IMR-90 (cell line): ENCODE measurements at regions of chr9 and their contacts with region 1.

Region 1: DNA sequence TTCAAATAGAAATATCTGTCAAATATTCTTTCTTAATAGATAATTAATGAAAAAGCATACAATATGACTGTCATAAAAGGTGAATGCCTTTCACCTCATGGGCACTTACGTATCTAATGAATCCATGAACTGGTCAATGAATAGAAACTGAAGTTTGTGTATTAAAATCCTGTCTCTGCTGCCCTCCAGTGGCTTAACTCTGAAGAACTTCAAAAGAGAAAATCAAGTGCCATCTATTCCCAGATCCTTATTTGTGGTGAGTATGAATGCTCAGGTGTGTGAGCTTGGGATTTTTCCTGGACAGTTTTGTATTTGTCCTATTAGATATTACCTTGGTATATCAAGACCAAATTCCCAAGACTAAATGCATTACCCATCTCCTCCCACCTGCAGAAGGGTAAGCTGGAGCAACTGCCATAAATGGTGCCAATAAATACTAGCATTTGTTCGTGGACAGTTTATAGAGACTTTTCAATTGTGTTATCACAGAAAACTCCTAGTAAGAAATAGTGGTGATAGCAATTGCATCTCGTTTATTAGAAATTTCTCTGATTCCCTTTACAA is 44.0 kb upstream of the SVEP1 start:
- DNase-seq: peak; percentile 70
- ATAC-seq: peak; percentile 11; the same call in 1 of the 2 replicates
- H3K4me3 ChIP-seq: no peak overlapping the region
- H3K27ac ChIP-seq: no peak overlapping the region
- H3K4me1 ChIP-seq: peaks cover 5% of the 10 kb centered on the region
- H3K27me3 ChIP-seq: no peaks in the 10 kb centered on the region
- CTCF ChIP-seq: peak; percentile 76
- POLR2A ChIP-seq: no peak
- RAD21 ChIP-seq: peak; percentile 81

Region 2: GRCh38 chr9:110256380-110257096 is 367.0 kb before region 1 on chr9 and contains the start of gene TXN:
- CTCF ChIA-PET with region 1: no interaction called
- POLR2A ChIA-PET with region 1: interaction called, 4 read pairs
- dilution Hi-C with region 1: no loop called
- in situ Hi-C with region 1: no loop called
- intact Hi-C with region 1: loop called (anchors 5 kb)
- DNase-seq: peak; percentile 87
- ATAC-seq: peak; percentile 91
- H3K4me3 ChIP-seq: peak within 1 kb of the TSS; percentile 71
- H3K27ac ChIP-seq: peak within 1 kb of the TSS; percentile 91
- H3K4me1 ChIP-seq: peaks cover 12% of the 10 kb centered on the region
- H3K27me3 ChIP-seq: no peaks in the 10 kb centered on the region
- CTCF ChIP-seq: no peak
- POLR2A ChIP-seq: peak; percentile 98
- RAD21 ChIP-seq: no peak
- total RNA-seq, gene TXN: 277 and 588 TPM in 2 replicates

Region 3: DNA sequence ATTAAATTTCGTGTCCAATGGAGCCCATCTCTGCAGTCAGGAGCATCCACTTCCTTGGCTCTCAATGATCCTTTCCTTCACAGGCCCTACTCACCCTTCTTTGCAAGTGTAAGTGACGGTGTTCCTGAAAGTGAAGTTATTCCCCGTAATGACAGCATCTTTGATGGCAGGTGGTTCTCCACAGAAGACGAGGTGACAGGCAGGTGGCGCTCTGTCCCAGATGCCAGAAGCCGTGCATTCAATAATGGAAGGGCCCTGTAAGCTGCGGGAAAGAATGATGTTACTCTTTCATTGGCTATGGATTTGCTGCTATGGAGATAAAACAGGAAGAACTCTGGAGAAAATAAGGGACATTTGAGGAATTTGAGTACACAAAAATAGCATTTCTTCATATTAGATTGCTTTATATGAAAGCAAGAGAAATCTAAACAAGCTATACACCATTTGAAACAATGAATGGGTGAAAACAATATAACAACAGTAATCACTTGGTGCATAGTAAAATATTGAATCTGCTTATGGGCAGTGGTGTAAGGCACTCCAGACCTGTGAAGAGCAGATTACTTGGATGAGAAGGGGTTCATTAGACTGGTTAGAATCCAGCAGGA is 195.9 kb before region 1 on chr9:
- CTCF ChIA-PET with region 1: no interaction called
- POLR2A ChIA-PET with region 1: no interaction called
- dilution Hi-C with region 1: no loop called
- in situ Hi-C with region 1: no loop called
- intact Hi-C with region 1: loop called (anchors 2 kb)
- DNase-seq: peak; percentile 28
- ATAC-seq: peak; percentile 12
- H3K4me3 ChIP-seq: no peak overlapping the region
- H3K27ac ChIP-seq: peak overlapping the region; percentile 91; the same call in 1 of the 2 replicates
- H3K4me1 ChIP-seq: peaks cover 8% of the 10 kb centered on the region
- H3K27me3 ChIP-seq: no peaks in the 10 kb centered on the region
- CTCF ChIP-seq: peak; percentile 47
- POLR2A ChIP-seq: no peak
- RAD21 ChIP-seq: peak; percentile 57

Region 4: DNA sequence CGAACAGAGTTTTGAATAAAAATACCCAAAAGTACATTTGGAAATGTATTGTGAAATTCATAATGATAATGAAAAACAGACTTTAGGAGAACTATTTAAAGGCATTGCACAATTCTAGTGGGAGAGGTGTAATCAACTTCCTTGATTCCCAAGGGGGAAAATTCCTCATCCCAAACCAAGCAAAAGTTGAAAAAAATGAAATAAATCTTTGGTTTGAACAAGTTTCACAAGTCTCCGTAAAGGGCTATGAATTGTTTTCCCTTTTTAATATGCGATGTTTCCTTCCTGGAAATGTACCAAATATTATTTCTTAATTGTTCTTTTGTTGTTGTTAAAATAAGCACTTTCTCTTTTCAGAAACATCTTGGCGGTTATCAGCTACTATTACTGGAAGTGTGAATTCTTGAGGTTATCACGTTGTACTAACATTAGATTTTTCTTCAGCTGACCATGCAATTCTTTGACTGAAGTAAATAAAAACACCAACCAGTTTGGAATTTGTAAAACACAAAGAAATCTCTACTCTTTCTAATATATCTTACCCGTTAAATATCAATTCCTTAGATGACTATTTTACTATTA is 103.3 kb before region 1 on chr9:
- CTCF ChIA-PET with region 1: no interaction called
- POLR2A ChIA-PET with region 1: no interaction called
- dilution Hi-C with region 1: no loop called
- in situ Hi-C with region 1: no loop called
- intact Hi-C with region 1: loop called (anchors 5 kb)
- DNase-seq: peak; percentile 57
- ATAC-seq: peak; percentile 17; the same call in 1 of the 2 replicates
- H3K4me3 ChIP-seq: no peak overlapping the region
- H3K27ac ChIP-seq: peak overlapping the region; percentile 5; the same call in 1 of the 2 replicates
- H3K4me1 ChIP-seq: peaks cover 4% of the 10 kb centered on the region
- H3K27me3 ChIP-seq: no peaks in the 10 kb centered on the region
- CTCF ChIP-seq: no peak
- POLR2A ChIP-seq: no peak
- RAD21 ChIP-seq: no peak

Region 5: DNA sequence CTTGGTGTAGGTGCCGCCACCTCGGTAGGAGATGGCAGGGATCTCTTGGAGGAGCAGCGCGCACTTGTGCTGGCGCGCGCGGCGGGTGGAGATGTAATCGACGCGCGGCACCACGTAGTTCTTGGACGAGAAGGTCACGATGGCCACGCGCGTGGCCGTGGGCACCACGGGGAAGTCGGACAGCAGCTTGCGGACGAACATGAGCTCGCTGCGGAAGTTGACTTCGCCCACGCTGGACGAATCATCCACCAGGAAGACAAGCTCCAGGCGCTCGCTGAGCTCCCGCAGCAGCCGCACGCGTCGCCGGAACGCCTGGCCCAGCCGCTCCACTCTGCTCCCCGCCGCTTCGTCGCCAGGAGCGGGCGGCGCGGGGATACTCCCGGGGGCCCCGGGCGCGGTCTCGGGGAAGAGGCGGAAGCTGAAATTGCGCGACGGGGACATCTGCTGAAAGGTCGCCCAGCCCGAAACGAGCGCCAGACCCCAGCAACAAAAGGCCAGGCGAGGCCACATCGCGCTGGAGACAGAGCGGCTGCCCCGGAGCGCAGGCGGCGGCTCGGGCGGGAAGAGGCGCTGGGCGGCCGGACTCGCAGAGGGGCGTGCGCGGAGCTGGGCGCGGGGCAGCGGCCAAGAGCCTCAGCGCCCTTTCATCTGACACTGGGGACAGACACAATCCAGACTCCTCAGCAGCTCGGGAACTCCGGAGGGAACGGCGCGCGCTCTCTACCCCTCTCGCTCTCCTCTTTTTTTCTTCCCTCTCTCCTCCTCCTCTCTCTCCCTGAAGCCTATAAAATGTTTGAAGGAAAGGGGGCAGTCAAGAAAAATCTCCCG is 44.3 kb before region 1 on chr9 and contains the start of gene SVEP1:
- CTCF ChIA-PET with region 1: no interaction called
- POLR2A ChIA-PET with region 1: no interaction called
- dilution Hi-C with region 1: no loop called
- in situ Hi-C with region 1: no loop called
- intact Hi-C with region 1: loop called (anchors 1 kb)
- DNase-seq: peak; percentile 77
- ATAC-seq: peak; percentile 61
- H3K4me3 ChIP-seq: peak within 1 kb of the TSS; percentile 51
- H3K27ac ChIP-seq: peak within 1 kb of the TSS; percentile 85
- H3K4me1 ChIP-seq: peaks cover 15% of the 10 kb centered on the region
- H3K27me3 ChIP-seq: no peaks in the 10 kb centered on the region
- CTCF ChIP-seq: no peak
- POLR2A ChIP-seq: peak; percentile 55
- RAD21 ChIP-seq: no peak
- total RNA-seq, gene SVEP1: 13.1 and 16.7 TPM in 2 replicates

Region 6: DNA sequence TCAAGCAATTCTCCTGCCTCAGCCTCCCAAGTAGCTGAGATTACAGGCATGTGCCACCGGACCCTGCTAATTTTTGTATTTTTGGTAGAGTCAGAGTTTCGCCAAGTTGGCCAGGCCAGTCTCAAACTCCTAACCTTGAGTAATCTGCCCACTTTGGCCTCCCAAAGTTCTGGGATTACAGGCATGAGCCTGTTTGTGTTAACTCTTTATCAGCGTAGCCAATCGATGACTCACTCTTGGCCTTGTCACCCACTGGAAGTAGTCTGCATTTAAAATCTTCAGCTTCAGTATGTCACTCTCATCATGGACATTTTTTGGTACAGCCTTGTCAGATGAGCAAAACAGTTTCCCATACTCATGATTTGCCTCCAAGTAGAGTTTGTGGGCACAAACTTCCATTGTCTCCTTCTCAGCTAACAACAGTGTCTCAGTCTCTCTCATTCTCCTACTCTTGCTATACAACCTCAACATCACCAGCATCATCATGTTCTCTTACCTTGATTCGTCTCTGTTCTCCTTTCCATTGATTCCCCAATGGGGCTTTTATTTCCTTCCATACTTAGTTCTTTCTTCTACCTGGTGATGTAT is 67.5 kb after region 1 on chr9:
- CTCF ChIA-PET with region 1: no interaction called
- POLR2A ChIA-PET with region 1: no interaction called
- dilution Hi-C with region 1: no loop called
- in situ Hi-C with region 1: no loop called
- intact Hi-C with region 1: no loop called
- DNase-seq: peak; percentile 35
- ATAC-seq: no peak
- H3K4me3 ChIP-seq: no peak overlapping the region
- H3K27ac ChIP-seq: no peak overlapping the region
- H3K4me1 ChIP-seq: no peaks in the 10 kb centered on the region
- H3K27me3 ChIP-seq: no peaks in the 10 kb centered on the region
- CTCF ChIP-seq: no peak
- POLR2A ChIP-seq: no peak
- RAD21 ChIP-seq: no peak